Head of caudate nucleus (tissue), 42 donors: ENCODE measurements at regions of chr11 and their contacts with region 1.

Region 1: DNA sequence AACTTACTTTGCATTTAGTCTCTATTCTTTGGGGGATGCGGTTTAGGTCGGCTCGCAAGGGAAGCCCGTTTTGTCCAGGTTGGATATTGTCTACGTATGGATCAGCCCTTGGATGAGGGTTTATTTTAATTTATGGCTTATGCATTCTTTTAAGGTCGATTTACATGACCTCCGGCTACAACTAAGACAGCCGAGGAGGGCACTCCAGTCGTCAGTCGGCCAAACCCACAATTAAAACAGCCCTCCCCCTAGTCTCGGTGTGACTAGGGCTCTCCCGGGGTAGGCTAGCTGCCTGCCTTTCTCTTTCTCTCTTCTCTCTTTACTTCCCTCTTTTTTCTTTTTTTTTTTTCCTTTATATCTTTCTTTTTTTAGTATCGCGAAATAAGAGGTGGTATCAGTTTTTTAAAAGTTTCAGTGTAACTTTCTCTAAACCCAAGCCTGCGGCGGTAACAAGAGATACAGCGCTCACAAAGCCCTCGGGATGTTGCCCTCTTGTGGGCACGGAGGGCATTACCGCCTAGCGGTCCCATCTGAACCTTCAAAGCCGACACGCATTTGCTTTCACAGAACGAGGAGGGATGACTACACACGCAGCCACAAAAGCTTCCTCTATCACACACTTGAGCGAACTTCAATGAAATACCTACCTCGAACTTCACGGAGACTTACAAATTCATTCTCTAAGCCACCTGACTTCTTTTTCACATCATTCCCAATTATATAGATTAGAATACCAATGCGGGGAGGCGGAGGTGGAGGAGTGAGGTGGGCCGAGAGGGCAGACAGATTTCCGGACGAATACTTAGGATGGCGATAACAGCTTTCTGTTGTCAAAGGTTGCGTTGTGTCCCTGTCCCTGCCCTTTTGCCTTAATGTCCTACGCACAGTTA is 132.3 kb upstream of the C11orf58 start:
- DNase-seq: peak; percentile 80 to 96 (median 92)

Region 2: GRCh38 chr11:15650105-15650938 is 955.8 kb before region 1 on chr11:
- intact Hi-C with region 1: loop called (anchors 5 kb)
- DNase-seq: peak; percentile 77 to 94 (median 90)

Region 3: GRCh38 chr11:16191212-16191867 is 414.8 kb before region 1 on chr11:
- intact Hi-C with region 1: loop called (anchors 10 kb)
- DNase-seq: peak in 2 of 42 donors; percentile 7 to 16

Region 4: GRCh38 chr11:16402654-16403447 is 203.3 kb before region 1 on chr11:
- intact Hi-C with region 1: loop called (anchors 5 kb)
- DNase-seq: peak in 34 of 42 donors; percentile 5 to 77 (median 32)

Region 5: DNA sequence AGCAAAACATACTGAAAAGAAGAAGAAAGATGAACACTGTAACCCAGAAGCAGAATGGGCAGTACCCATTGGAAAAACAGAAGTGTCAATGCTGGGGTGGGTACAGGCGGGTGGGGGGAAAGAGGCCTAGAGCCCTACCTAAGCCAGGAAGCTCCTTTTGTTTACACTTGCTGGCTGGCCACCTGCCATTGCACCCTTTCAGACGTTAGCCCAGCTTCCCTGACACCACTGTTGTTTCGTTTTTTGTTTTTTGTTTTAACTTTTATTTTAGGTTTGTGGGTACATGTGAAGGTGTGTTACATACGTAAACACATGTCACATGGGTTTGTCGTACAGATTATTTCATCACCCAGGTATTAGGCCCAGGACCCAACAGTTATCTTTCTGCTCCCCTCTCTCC is 352.7 kb after region 1 on chr11:
- intact Hi-C with region 1: no loop called
- DNase-seq: no peak